ENCODE measurements at regions of chr1 and their contacts with region 1.

Region 1: GRCh38 chr1:167803358-167804207 is 81.8 kb downstream of the MPZL1 start:
- DNase-seq: peak; percentile 92 to 95
- H3K4me3 ChIP-seq: peak overlapping the region in 1 of 4 experiments; percentile 38; a peak in 1 of 8 replicates
- H3K27ac ChIP-seq: peak overlapping the region; percentile 59; the same call in 1 of the 2 replicates
- H3K4me1 ChIP-seq: no peaks in the 10 kb centered on the region
- H3K27me3 ChIP-seq: no peaks in the 10 kb centered on the region
- CTCF ChIP-seq: peak; percentile 98 to 100 (median 98)
- EP300 ChIP-seq: peak in 1 of 2 experiments; percentile 69; a peak in 1 of 3 replicates
- POLR2A ChIP-seq: peak in 1 of 2 experiments; percentile 60; a peak in 1 of 3 replicates
- RAD21 ChIP-seq: peak; percentile 83 to 89

Region 2: GRCh38 chr1:167761400-167761799 is 42.2 kb before region 1 on chr1:
- CTCF ChIA-PET with region 1: interaction called, 11 read pairs
- POLR2A ChIA-PET with region 1: no interaction called
- DNase-seq: no peak
- H3K4me3 ChIP-seq: no peak overlapping the region
- H3K27ac ChIP-seq: no peak overlapping the region
- H3K4me1 ChIP-seq: no peaks in the 10 kb centered on the region; a peak in 1 of 7 replicates
- H3K27me3 ChIP-seq: no peaks in the 10 kb centered on the region
- CTCF ChIP-seq: no peak
- EP300 ChIP-seq: no peak
- POLR2A ChIP-seq: no peak
- RAD21 ChIP-seq: no peak

Region 3: DNA sequence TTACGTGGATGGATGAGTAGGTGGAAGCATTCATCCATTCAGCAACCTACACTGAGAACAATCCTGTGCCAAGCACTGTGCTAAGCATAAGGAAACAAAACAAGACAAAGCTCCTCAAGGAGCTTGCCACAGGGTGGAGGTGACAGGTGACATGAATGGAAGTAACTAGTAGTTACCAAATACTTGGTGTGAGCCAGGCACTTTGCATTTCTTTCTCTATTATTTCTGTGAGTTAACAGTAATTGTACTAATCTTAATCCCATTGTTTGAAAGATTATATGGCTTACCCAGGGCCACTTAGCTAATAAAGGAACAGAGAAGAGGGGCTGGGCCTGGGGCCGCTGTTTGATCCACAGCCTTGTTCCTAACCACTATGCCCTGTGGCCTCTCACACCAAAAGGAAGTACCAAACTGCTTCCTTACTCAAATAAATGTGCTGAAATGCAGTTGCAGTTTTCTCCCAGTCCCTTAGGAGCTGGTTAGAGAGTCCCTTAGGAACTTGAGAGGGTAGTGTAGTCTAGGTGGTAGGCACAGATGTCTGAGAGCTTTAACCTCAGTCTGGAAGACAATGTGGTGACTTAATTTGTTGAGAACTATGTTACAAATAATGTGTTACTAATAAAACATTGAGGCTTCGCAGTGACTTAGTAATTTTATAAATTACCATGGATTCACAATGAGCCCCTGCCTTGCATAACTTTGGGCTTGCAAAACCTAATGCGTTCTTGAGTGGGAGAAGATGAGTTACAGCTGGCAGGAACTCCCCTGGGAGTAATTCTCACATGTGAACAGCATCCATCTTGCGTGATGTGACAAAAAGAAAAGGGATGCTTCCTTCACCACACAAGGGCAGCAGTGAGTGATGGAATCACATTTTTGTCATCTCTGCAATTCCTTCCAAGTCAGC is 12.0 kb before region 1 on chr1:
- CTCF ChIA-PET with region 1: interaction called, 16 read pairs
- POLR2A ChIA-PET with region 1: interaction called, 3 read pairs
- DNase-seq: no peak
- H3K4me3 ChIP-seq: no peak overlapping the region
- H3K27ac ChIP-seq: no peak overlapping the region
- H3K4me1 ChIP-seq: peaks cover 2 to 8% (median 3%) of the 10 kb centered on the region in 4 experiments; a peak in 3 of 7 replicates
- H3K27me3 ChIP-seq: no peaks in the 10 kb centered on the region
- CTCF ChIP-seq: no peak
- EP300 ChIP-seq: no peak
- POLR2A ChIP-seq: no peak
- RAD21 ChIP-seq: no peak